ENCODE measurements at regions of chr10 and their contacts with region 1.

Region 1: DNA sequence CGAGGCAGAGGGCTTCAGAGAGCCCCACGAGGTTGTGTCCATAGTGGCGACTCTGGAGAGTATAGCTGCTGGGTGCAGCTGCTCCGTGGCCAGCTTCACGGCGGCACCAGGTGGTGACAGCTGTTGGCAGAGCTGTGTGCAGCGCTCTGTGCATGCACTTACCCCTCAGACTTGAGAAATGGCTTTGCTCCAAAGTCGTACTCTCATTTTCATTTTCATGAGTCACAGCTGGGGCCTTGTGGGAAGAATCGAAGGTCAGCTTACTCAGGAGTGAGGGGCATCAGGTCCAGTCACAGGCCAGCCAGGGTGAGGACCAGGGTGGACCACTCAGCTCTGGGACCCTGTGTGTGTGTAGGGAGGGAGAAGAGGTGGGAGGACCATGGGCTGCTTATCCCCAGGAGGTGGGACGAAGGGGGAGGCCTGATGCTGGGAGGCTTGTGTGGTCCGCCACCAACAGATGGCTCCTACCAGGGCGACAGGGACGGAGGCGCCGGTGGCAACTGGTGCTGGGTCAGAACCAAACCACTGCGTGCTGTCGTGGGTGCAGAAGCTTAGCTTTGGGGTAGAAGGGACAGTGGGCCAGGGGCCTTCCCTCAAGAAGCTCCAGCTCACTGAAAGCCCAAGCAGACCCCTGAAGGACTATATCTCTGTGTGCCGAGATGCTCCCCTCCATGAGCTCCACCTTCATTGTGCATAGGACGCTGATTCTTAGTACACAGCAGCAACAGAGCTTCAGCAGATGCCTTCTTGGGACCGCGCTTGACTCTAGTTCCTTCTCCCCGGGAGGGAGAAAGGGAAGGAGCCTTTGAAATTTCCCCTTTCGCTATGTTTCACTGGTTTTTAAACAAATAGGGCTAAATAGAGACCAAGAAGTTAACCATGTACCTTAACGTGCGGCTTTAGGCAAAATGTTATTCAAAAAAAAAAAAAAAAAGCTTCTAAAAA is 225.0 kb downstream of the CELF2 start:
- DNase-seq: peak; percentile 64 to 90 (median 79)
- ATAC-seq: peak; percentile 95 to 96 (median 96)
- H3K4me3 ChIP-seq: no peak overlapping the region
- H3K27ac ChIP-seq: peak overlapping the region; percentile 36 to 89 (median 80)
- H3K4me1 ChIP-seq: peaks cover 0 to 81% (median 42%) of the 10 kb centered on the region in 12 donors
- H3K27me3 ChIP-seq: no peaks in the 10 kb centered on the region
- CTCF ChIP-seq: peak in 2 of 12 donors; percentile 6 to 30
- POLR2A ChIP-seq: no peak

Region 2: GRCh38 chr10:11197266-11197712 is 45.4 kb before region 1 on chr10:
- intact Hi-C with region 1: loop called in 2 of 10 experiments (anchors 5 kb)
- DNase-seq: peak in 4 of 5 donors; percentile 44 to 64 (median 46)
- ATAC-seq: peak; percentile 71 to 87 (median 84)
- H3K4me3 ChIP-seq: peak overlapping the region in 1 of 12 donors; percentile 1
- H3K27ac ChIP-seq: peak overlapping the region in 10 of 12 donors; percentile 3 to 59 (median 21)
- H3K4me1 ChIP-seq: peaks cover 0 to 85% (median 44%) of the 10 kb centered on the region in 12 donors
- H3K27me3 ChIP-seq: no peaks in the 10 kb centered on the region
- CTCF ChIP-seq: no peak
- POLR2A ChIP-seq: no peak

Region 3: GRCh38 chr10:11204351-11204942 is 38.3 kb before region 1 on chr10:
- intact Hi-C with region 1: loop called in 2 of 10 experiments (anchors 5 kb)
- DNase-seq: no peak
- ATAC-seq: peak in 1 of 4 donors; percentile 25
- H3K4me3 ChIP-seq: no peak overlapping the region
- H3K27ac ChIP-seq: peak overlapping the region in 1 of 12 donors; percentile 0
- H3K4me1 ChIP-seq: peaks cover 0 to 82% (median 21%) of the 10 kb centered on the region in 12 donors
- H3K27me3 ChIP-seq: no peaks in the 10 kb centered on the region
- CTCF ChIP-seq: no peak
- POLR2A ChIP-seq: no peak